ENCODE measurements at regions of chr12 and their contacts with region 1.

Region 1: DNA sequence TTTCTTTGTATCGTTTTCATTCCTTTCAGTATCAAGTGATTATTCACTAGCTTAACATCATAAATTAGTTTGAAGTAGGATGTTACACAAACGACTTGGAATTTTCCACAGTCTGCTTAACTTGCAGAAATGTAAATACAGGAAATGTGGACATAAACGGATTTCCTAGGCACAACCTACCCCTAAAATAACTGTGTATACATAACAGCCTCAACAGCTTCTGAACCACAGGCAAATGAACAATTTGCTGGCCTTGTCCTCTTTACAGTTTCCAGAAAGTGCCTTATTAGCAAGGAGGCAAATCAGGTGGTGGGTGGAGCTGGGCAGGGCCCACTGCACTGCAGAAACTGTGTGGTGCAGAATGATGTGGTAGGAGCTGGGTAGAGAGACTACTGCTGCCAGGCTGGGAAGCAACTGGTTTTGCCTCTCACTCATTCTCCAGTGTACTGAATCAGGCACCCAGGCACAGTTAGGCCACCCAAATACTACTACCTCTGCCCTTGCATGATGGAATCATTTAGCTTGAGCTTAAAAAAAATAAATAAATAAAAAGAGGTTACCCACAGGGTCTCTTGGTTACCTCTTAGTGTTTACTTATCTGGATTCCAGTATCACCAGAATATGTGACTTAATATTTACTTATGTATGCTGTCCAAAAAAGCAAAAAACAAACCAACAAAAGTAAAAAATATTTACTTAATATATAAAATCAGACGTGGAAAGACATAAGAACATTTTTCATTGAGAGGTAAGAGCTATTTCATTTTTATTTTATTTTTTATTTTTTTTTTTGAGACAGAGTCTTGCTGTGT is 14.3 kb downstream of the DRAM1 start:
- DNase-seq: peak in 1 of 2 experiments; percentile 67
- ATAC-seq: peak; percentile 91 to 95
- H3K4me3 ChIP-seq: no peak overlapping the region
- H3K27ac ChIP-seq: peak overlapping the region; percentile 58 to 89
- H3K4me1 ChIP-seq: peaks cover 54% of the 10 kb centered on the region
- CTCF ChIP-seq: no peak
- EP300 ChIP-seq: no peak
- POLR2A ChIP-seq: no peak
- RAD21 ChIP-seq: no peak

Region 2: GRCh38 chr12:101876861-101877815 is 14.5 kb before region 1 on chr12 and contains the start of gene DRAM1:
- CTCF ChIA-PET with region 1: interaction called, 3 read pairs
- POLR2A ChIA-PET with region 1: interaction called, 14 read pairs
- DNase-seq: peak; percentile 62 to 92
- ATAC-seq: peak; percentile 91 to 94
- H3K4me3 ChIP-seq: peak within 1 kb of the TSS; percentile 79
- H3K27ac ChIP-seq: peak within 1 kb of the TSS; percentile 94 to 97
- H3K4me1 ChIP-seq: peaks cover 11% of the 10 kb centered on the region; the same call in 1 of the 3 replicates
- CTCF ChIP-seq: 0 out of 3 replicates have a peak, but pooled peaks have one; percentile 20
- EP300 ChIP-seq: no peak; a peak in 2 of 5 replicates
- POLR2A ChIP-seq: peak; percentile 42; the same call in 1 of the 2 replicates
- RAD21 ChIP-seq: peak in 1 of 2 experiments; percentile 25; a peak in 1 of 5 replicates
- polyA plus RNA-seq, gene DRAM1: 28.0 and 31.1 TPM in 2 replicates

Region 3: DNA sequence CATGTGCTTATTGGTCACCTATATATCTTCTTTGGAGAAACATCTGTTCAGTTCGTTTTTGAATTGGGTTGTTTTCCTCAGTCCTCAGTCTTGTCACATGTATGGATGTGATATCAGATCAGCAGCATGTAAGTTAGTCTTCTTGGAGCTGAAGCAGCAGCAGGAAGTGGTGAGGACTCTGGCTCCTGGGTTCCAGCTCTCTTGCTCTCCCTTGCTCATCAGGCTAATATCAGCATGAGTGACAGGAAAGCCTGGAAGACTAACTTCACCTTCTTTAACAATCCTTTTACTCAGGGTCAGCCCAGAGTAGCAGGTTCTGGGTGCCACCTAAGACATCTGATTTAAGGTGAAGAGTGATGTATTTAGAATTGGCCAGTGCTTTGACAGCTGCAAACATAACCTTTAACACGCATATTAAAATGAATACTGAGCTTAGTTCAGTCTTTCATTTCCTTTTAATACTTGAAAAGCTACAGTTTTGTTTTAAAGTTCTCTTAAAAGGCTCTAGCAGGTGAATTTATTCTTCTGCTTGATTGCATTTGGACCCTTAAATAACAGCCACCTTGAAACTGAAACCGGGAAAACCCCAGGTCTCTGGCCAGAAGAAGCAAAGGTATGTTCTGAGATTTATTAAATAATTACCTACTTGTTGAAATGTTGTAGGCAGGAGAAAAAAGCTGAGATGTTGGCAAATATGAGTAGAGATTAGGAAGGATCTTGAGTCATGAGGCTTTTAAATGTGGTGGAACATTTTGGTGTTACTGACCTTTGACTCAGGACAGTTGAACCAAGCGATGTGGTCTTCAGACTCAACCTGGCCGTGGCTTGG is 40.0 kb after region 1 on chr12:
- CTCF ChIA-PET with region 1: no interaction called
- POLR2A ChIA-PET with region 1: no interaction called
- DNase-seq: no peak
- ATAC-seq: no peak
- H3K4me3 ChIP-seq: no peak overlapping the region
- H3K27ac ChIP-seq: no peak overlapping the region
- H3K4me1 ChIP-seq: no peaks in the 10 kb centered on the region
- CTCF ChIP-seq: no peak
- EP300 ChIP-seq: no peak
- POLR2A ChIP-seq: no peak
- RAD21 ChIP-seq: no peak